ENCODE measurements at regions of chr7 and their contacts with region 1.

Region 1: GRCh38 chr7:76314042-76314721 is 11.7 kb downstream of the HSPB1 start:
- DNase-seq: peak; percentile 96
- H3K4me3 Mint-ChIP-seq: no peak overlapping the region
- H3K27ac Mint-ChIP-seq: peak overlapping the region; percentile 76
- H3K4me1 Mint-ChIP-seq: peaks cover 25% of the 10 kb centered on the region
- H3K27me3 Mint-ChIP-seq: no peaks in the 10 kb centered on the region

Region 2: GRCh38 chr7:76166404-76167255 is 147.6 kb before region 1 on chr7:
- CTCF ChIA-PET with region 1: interaction called, 10 read pairs
- POLR2A ChIA-PET with region 1: no interaction called
- DNase-seq: peak; percentile 94
- H3K4me3 Mint-ChIP-seq: peak overlapping the region; percentile 82
- H3K27ac Mint-ChIP-seq: peak overlapping the region; percentile 96
- H3K4me1 Mint-ChIP-seq: peaks cover 11% of the 10 kb centered on the region
- H3K27me3 Mint-ChIP-seq: no peaks in the 10 kb centered on the region

Region 3: GRCh38 chr7:76201730-76202665 is 112.2 kb before region 1 on chr7 and contains the start of gene SRRM3:
- CTCF ChIA-PET with region 1: interaction called, 17 read pairs
- POLR2A ChIA-PET with region 1: no interaction called
- DNase-seq: peak; percentile 85
- H3K4me3 Mint-ChIP-seq: no peak within 1 kb of the TSS
- H3K27ac Mint-ChIP-seq: no peak within 1 kb of the TSS
- H3K4me1 Mint-ChIP-seq: no peaks in the 10 kb centered on the region
- H3K27me3 Mint-ChIP-seq: peaks cover 4% of the 10 kb centered on the region
- total RNA-seq, gene SRRM3: not detected

Region 4: GRCh38 chr7:76262683-76263402 is 51.3 kb before region 1 on chr7:
- CTCF ChIA-PET with region 1: interaction called, 12 read pairs
- POLR2A ChIA-PET with region 1: no interaction called
- DNase-seq: peak; percentile 33
- H3K4me3 Mint-ChIP-seq: no peak overlapping the region
- H3K27ac Mint-ChIP-seq: no peak overlapping the region
- H3K4me1 Mint-ChIP-seq: peaks cover 6% of the 10 kb centered on the region
- H3K27me3 Mint-ChIP-seq: peaks cover 31% of the 10 kb centered on the region

Region 5: GRCh38 chr7:76282344-76283253 is 31.6 kb before region 1 on chr7:
- CTCF ChIA-PET with region 1: interaction called, 14 read pairs
- POLR2A ChIA-PET with region 1: no interaction called
- DNase-seq: no peak
- H3K4me3 Mint-ChIP-seq: peak overlapping the region; percentile 41
- H3K27ac Mint-ChIP-seq: no peak overlapping the region
- H3K4me1 Mint-ChIP-seq: peaks cover 14% of the 10 kb centered on the region
- H3K27me3 Mint-ChIP-seq: peaks cover 49% of the 10 kb centered on the region

Region 6: DNA sequence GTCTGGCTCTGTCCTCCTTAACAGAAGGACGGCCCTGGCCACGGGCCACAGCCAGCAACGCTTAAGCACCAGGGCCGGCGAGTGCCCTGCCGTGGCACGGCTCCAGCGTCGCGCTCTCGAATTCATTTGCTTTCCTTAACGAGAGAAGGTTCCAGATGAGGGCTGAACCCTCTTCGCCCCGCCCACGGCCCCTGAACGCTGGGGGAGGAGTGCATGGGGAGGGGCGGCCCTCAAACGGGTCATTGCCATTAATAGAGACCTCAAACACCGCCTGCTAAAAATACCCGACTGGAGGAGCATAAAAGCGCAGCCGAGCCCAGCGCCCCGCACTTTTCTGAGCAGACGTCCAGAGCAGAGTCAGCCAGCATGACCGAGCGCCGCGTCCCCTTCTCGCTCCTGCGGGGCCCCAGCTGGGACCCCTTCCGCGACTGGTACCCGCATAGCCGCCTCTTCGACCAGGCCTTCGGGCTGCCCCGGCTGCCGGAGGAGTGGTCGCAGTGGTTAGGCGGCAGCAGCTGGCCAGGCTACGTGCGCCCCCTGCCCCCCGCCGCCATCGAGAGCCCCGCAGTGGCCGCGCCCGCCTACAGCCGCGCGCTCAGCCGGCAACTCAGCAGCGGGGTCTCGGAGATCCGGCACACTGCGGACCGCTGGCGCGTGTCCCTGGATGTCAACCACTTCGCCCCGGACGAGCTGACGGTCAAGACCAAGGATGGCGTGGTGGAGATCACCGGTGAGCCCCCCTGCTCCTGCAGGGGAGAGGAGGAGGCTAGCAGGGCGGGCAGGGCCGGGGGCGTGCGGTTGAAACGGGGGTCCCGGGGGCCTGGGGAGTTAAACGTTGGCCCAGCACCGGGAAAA is 11.6 kb before region 1 on chr7 and contains the start of gene HSPB1:
- CTCF ChIA-PET with region 1: interaction called, 53 read pairs
- POLR2A ChIA-PET with region 1: interaction called, 3 read pairs
- DNase-seq: peak; percentile 44
- H3K4me3 Mint-ChIP-seq: peak within 1 kb of the TSS; percentile 84
- H3K27ac Mint-ChIP-seq: peak within 1 kb of the TSS; percentile 85
- H3K4me1 Mint-ChIP-seq: peaks cover 19% of the 10 kb centered on the region
- H3K27me3 Mint-ChIP-seq: peaks cover 17% of the 10 kb centered on the region
- total RNA-seq, gene HSPB1: 27.0 to 28.1 TPM

Measured in activated CD4-positive, alpha-beta T cell treated with anti-CD3 and anti-CD28 coated beads, Interleukin-2, amount 10 ng/mL, durations not matched to agents 7 days and 5 days (primary cell).